ENCODE measurements at regions of chr7 and their contacts with region 1.

Region 1: DNA sequence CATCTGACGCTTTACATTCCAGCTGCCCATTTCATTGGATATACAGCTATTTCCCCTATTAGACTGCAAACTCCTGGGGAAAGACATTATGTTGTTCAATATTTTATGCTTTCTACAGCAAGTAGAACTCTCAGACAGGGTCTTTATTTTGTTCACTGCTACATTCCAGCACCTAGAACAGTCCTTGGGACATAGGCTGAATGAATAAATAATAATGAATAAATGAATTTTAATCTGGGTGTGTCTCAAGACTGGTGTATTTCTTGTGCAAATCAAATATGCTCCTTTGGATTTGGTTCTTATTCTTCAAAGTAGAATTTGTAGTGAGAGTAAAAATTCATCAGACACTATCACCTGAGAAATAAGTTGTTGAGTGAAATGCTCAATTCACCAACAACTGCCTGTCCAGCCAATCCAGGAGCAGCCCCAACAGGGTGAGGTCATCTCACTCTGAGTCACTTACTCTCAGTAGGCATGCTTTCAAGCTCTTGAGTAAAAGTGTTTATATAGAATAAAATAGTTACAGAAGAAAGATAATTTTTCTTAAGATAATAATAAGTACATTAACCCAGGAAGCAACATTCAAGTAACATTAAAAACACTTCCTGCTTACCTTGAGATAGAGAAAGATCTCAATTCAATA is 287.5 kb upstream of the NPVF start:
- DNase-seq: no peak
- H3K4me3 Mint-ChIP-seq: no peak overlapping the region
- H3K27ac Mint-ChIP-seq: no peak overlapping the region
- H3K4me1 Mint-ChIP-seq: no peaks in the 10 kb centered on the region
- H3K27me3 Mint-ChIP-seq: peaks cover 54% of the 10 kb centered on the region
- CTCF ChIP-seq: no peak

Region 2: DNA sequence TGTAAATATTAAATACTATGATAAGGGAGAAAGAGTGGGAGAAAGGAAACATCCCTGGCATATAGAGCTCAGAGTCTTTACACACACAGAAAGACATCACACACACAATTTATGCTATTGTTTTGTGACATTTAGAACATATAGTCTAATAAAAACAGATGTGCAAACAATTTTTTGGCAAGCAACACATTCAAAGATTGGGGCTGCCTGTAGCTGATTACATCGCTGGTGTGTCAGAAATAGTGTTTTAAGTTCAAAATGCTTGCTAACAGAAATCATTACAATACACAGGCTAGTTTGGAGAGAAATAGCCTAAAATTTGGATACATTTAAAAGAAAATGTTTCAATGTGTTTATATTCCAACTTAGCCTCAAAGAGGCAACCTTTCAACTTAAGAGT is 30.7 kb before region 1 on chr7:
- CTCF ChIA-PET with region 1: no interaction called
- intact Hi-C with region 1: no loop called
- DNase-seq: no peak
- H3K4me3 Mint-ChIP-seq: no peak overlapping the region
- H3K27ac Mint-ChIP-seq: no peak overlapping the region
- H3K4me1 Mint-ChIP-seq: no peaks in the 10 kb centered on the region
- H3K27me3 Mint-ChIP-seq: peaks cover 58% of the 10 kb centered on the region
- CTCF ChIP-seq: no peak

Region 3: GRCh38 chr7:25496476-25497368 is 19.0 kb before region 1 on chr7:
- CTCF ChIA-PET with region 1: no interaction called
- intact Hi-C with region 1: loop called (anchors 1 kb)
- DNase-seq: no peak
- H3K4me3 Mint-ChIP-seq: no peak overlapping the region
- H3K27ac Mint-ChIP-seq: no peak overlapping the region
- H3K4me1 Mint-ChIP-seq: no peaks in the 10 kb centered on the region
- H3K27me3 Mint-ChIP-seq: peaks cover 12% of the 10 kb centered on the region
- CTCF ChIP-seq: no peak